PC-9 (cell line): ENCODE measurements at regions of chr1 and their contacts with region 1.

Region 1: GRCh38 chr1:59699227-59699847 is 115.4 kb upstream of the HOOK1 start:
- DNase-seq: peak in 1 of 2 experiments; percentile 8
- H3K4me3 ChIP-seq: no peak overlapping the region
- H3K27ac ChIP-seq: no peak overlapping the region
- H3K4me1 ChIP-seq: no peaks in the 10 kb centered on the region; the same call in 1 of the 2 replicates
- H3K27me3 ChIP-seq: no peaks in the 10 kb centered on the region
- CTCF ChIP-seq: peak; percentile 96

Region 2: DNA sequence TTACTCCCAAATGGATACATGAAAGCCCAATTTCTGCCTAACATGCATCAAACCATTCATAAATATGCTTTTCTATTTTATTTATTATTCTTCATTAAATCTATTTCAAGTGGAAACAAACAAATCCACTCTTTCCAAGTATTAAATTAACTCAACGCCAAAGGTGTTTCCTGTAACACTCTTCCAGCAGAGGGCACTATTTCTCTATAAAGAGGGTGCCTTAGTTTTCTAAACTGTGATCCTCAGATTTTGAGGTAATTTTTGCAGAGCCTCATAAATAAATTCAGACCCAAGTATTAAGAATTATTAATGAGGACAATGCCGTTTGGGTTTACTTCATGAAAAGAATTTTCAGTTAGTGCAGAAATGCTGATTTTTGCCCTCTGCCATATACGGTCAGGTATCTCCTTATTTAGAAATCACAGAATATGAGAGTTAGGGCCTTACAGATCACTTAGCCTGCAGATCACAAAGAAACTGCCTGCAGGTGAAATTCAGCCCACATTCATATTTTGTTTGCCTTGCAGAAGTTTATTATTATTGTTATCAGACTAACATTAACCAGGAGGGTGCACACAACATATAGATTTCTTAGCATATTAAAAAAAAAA is 959.4 kb before region 1 on chr1:
- CTCF ChIA-PET with region 1: no interaction called
- POLR2A ChIA-PET with region 1: no interaction called
- intact Hi-C with region 1: loop called (anchors 1 kb)
- DNase-seq: peak in 1 of 2 experiments; percentile 56
- H3K4me3 ChIP-seq: no peak overlapping the region
- H3K27ac ChIP-seq: no peak overlapping the region
- H3K4me1 ChIP-seq: peaks cover 12% of the 10 kb centered on the region
- H3K27me3 ChIP-seq: no peaks in the 10 kb centered on the region
- CTCF ChIP-seq: peak; percentile 95

Region 3: GRCh38 chr1:58903514-58904298 is 795.6 kb before region 1 on chr1:
- CTCF ChIA-PET with region 1: no interaction called
- POLR2A ChIA-PET with region 1: no interaction called
- intact Hi-C with region 1: loop called (anchors 5 kb)
- DNase-seq: peak; percentile 81 to 94
- H3K4me3 ChIP-seq: peak overlapping the region; percentile 63
- H3K27ac ChIP-seq: peak overlapping the region; percentile 90
- H3K4me1 ChIP-seq: peaks cover 69% of the 10 kb centered on the region
- H3K27me3 ChIP-seq: no peaks in the 10 kb centered on the region
- CTCF ChIP-seq: no peak

Region 4: DNA sequence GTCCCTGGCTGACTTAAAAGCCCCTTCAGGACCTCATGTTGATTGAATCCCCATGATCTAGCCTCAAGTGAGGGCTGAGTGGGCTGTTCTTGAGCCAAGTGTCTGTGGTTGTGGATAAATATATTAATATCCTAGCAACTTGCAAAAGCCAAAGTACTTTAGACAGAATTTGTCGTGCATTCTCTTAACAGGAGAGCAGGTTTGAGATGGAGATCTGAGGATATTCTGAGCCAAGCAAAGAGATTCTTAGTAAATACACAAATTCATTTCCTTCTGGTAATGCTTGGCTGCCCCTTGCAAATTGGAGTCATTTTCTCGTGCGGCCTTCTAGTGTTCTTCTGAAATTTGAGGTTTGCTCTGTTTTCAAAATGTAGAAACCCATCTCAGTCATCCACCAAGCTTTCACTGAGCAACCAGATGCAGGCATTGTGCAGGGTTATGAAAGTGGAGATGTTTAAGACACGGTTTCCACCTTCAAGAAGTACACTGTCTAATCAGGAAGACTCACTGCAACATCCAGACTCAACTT is 673.4 kb before region 1 on chr1:
- CTCF ChIA-PET with region 1: interaction called, 10 read pairs
- POLR2A ChIA-PET with region 1: no interaction called
- intact Hi-C with region 1: no loop called
- DNase-seq: no peak
- H3K4me3 ChIP-seq: no peak overlapping the region
- H3K27ac ChIP-seq: no peak overlapping the region
- H3K4me1 ChIP-seq: peaks cover 46% of the 10 kb centered on the region
- H3K27me3 ChIP-seq: no peaks in the 10 kb centered on the region
- CTCF ChIP-seq: no peak

Region 5: GRCh38 chr1:59375321-59376220 is 323.8 kb before region 1 on chr1:
- CTCF ChIA-PET with region 1: no interaction called
- POLR2A ChIA-PET with region 1: no interaction called
- intact Hi-C with region 1: loop called (anchors 5 kb)
- DNase-seq: peak; percentile 25 to 54
- H3K4me3 ChIP-seq: no peak overlapping the region
- H3K27ac ChIP-seq: no peak overlapping the region
- H3K4me1 ChIP-seq: no peaks in the 10 kb centered on the region
- H3K27me3 ChIP-seq: no peaks in the 10 kb centered on the region
- CTCF ChIP-seq: no peak

Region 6: GRCh38 chr1:59759156-59759925 is 60.0 kb after region 1 on chr1:
- CTCF ChIA-PET with region 1: interaction called, 3 read pairs
- POLR2A ChIA-PET with region 1: no interaction called
- intact Hi-C with region 1: loop called (anchors 2 kb)
- DNase-seq: peak; percentile 67 to 77
- H3K4me3 ChIP-seq: peak overlapping the region; percentile 31; the same call in 1 of the 2 replicates
- H3K27ac ChIP-seq: no peak overlapping the region
- H3K4me1 ChIP-seq: peaks cover 5% of the 10 kb centered on the region
- H3K27me3 ChIP-seq: no peaks in the 10 kb centered on the region
- CTCF ChIP-seq: peak; percentile 97